GM12878 (cell line): ENCODE measurements at regions of chr3 and their contacts with region 1.

Region 1: DNA sequence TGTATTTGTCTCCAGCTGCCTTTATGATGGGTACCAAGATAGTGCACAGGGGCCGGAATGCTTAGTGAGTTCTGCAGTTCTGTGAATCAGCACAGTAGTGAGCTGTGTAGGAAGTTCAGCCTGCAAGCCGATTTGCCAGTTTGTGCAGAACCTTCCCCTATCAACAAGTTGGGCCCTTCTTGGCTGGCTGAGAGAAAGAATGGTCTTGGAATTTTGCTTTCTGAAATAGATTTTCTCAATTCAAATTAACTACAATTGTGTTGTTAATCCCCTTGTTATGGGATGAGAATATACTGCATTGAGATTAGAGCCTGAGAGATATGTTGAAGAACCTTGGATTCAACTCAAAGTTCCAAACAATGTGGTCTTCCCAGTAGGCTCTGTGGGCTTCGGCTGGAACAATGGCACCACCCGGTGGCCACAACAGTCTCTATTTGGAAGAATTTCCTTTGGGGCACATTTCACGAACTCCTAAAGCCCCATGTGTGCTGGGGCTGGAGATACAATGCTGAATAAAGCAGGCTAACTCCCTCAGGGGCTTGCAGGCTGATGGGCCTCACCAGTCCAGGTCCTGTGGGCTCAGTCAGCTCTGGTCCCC is 59.1 kb downstream of the TRIM42 start:
- DNase-seq: no peak
- ATAC-seq: peak; percentile 83
- H3K4me3 ChIP-seq: no peak overlapping the region
- H3K27ac ChIP-seq: no peak overlapping the region
- H3K4me1 ChIP-seq: no peaks in the 10 kb centered on the region
- H3K27me3 ChIP-seq: peaks cover 0 to 6% of the 10 kb centered on the region in 2 experiments; a peak in 2 of 4 replicates
- CTCF ChIP-seq: peak; percentile 33 to 67 (median 45); a peak in 4 of 6 replicates
- EP300 ChIP-seq: no peak
- POLR2A ChIP-seq: no peak
- RAD21 ChIP-seq: peak; percentile 64

Region 2: GRCh38 chr3:140276703-140277102 is 460.3 kb before region 1 on chr3:
- CTCF ChIA-PET with region 1: interaction called, 13 read pairs
- POLR2A ChIA-PET with region 1: no interaction called
- RAD21 ChIA-PET with region 1: no interaction called
- SMC1A ChIA-PET with region 1: interaction called, 3 read pairs
- in situ Hi-C with region 1: no loop called
- intact Hi-C with region 1: loop called (anchors 1 kb)
- DNase-seq: no peak
- ATAC-seq: peak; percentile 69
- H3K4me3 ChIP-seq: no peak overlapping the region
- H3K27ac ChIP-seq: no peak overlapping the region
- H3K4me1 ChIP-seq: no peaks in the 10 kb centered on the region
- H3K27me3 ChIP-seq: peaks cover 0 to 8% of the 10 kb centered on the region in 2 experiments; a peak in 2 of 4 replicates
- CTCF ChIP-seq: peak; percentile 43 to 49 (median 44); a peak in 4 of 6 replicates
- EP300 ChIP-seq: no peak
- POLR2A ChIP-seq: no peak
- RAD21 ChIP-seq: peak; percentile 32; the same call in 1 of the 2 replicates

Region 3: DNA sequence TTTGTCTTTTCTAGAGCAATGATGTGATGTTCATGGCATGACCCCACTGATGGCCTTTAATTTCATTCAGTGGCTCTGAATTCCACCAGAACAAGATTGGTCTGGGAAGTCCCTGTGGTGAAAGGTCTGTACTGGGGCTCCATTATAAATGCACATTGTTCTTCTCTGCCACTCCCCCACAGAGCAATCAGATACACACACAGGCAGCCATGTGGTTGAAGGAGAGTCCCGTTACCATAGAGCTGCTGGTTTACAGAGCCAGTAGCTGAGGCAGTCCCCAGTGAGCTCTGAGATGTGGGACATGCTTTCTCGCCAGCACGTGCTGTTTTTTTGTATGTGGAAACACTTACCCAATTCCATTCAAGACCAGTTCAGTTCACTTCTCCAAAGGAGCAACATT is 231.7 kb before region 1 on chr3:
- CTCF ChIA-PET with region 1: interaction called, 5 read pairs
- POLR2A ChIA-PET with region 1: no interaction called
- RAD21 ChIA-PET with region 1: interaction called, 3 read pairs
- SMC1A ChIA-PET with region 1: no interaction called
- in situ Hi-C with region 1: no loop called
- intact Hi-C with region 1: loop called (anchors 2 kb)
- DNase-seq: peak; percentile 33
- ATAC-seq: peak; percentile 98
- H3K4me3 ChIP-seq: no peak overlapping the region
- H3K27ac ChIP-seq: no peak overlapping the region
- H3K4me1 ChIP-seq: no peaks in the 10 kb centered on the region
- H3K27me3 ChIP-seq: no peaks in the 10 kb centered on the region; a peak in 1 of 4 replicates
- CTCF ChIP-seq: no peak
- EP300 ChIP-seq: peak in 1 of 2 experiments; percentile 29; a peak in 1 of 4 replicates
- POLR2A ChIP-seq: no peak
- RAD21 ChIP-seq: no peak

Region 4: GRCh38 chr3:140636406-140637130 is 100.4 kb before region 1 on chr3:
- CTCF ChIA-PET with region 1: interaction called, 4 read pairs
- POLR2A ChIA-PET with region 1: no interaction called
- RAD21 ChIA-PET with region 1: interaction called, 6 read pairs
- SMC1A ChIA-PET with region 1: interaction called, 16 read pairs
- in situ Hi-C with region 1: no loop called
- intact Hi-C with region 1: loop called (anchors 2 kb)
- DNase-seq: no peak
- ATAC-seq: no peak
- H3K4me3 ChIP-seq: no peak overlapping the region
- H3K27ac ChIP-seq: no peak overlapping the region
- H3K4me1 ChIP-seq: no peaks in the 10 kb centered on the region
- H3K27me3 ChIP-seq: no peaks in the 10 kb centered on the region
- CTCF ChIP-seq: no peak
- EP300 ChIP-seq: no peak
- POLR2A ChIP-seq: no peak
- RAD21 ChIP-seq: no peak

Region 5: GRCh38 chr3:141094790-141095545 is 358.0 kb after region 1 on chr3:
- CTCF ChIA-PET with region 1: no interaction called
- POLR2A ChIA-PET with region 1: no interaction called
- RAD21 ChIA-PET with region 1: no interaction called
- SMC1A ChIA-PET with region 1: no interaction called
- in situ Hi-C with region 1: no loop called
- intact Hi-C with region 1: no loop called
- DNase-seq: no peak
- ATAC-seq: no peak
- H3K4me3 ChIP-seq: no peak overlapping the region
- H3K27ac ChIP-seq: no peak overlapping the region
- H3K4me1 ChIP-seq: no peaks in the 10 kb centered on the region
- H3K27me3 ChIP-seq: no peaks in the 10 kb centered on the region
- CTCF ChIP-seq: no peak
- EP300 ChIP-seq: no peak
- POLR2A ChIP-seq: no peak
- RAD21 ChIP-seq: no peak